ENCODE measurements at regions of chr5 and their contacts with region 1.

Region 1: DNA sequence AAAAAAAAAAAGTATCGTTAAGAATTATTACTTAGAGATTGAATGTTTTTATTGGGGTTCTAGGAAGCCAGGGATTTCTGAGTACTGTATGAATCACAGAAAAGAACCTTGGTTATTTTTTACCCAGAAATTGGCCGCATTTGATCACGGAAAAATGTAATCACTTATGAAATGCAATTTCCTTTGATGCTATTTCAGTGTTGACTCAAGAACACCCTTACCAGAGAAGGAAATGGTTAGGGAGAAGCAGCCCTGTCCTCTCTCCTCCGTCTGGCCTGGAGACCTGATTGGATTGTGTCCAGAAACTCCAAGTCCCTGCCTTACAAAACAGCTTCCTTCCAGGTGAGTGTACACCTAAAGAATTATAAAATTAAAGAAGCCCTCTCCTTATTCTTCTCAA is 116.7 kb downstream of the MED10 start:
- DNase-seq: no peak
- H3K4me3 ChIP-seq: no peak overlapping the region
- H3K27ac ChIP-seq: no peak overlapping the region
- H3K4me1 ChIP-seq: no peaks in the 10 kb centered on the region
- H3K27me3 ChIP-seq: no peaks in the 10 kb centered on the region
- CTCF ChIP-seq: no peak

Region 2: GRCh38 chr5:5964347-5964746 is 297.3 kb before region 1 on chr5:
- CTCF ChIA-PET with region 1: no interaction called
- dilution Hi-C with region 1: no loop called
- in situ Hi-C with region 1: no loop called
- intact Hi-C with region 1: no loop called
- DNase-seq: no peak
- H3K4me3 ChIP-seq: no peak overlapping the region
- H3K27ac ChIP-seq: no peak overlapping the region
- H3K4me1 ChIP-seq: no peaks in the 10 kb centered on the region
- H3K27me3 ChIP-seq: no peaks in the 10 kb centered on the region
- CTCF ChIP-seq: no peak

Region 3: GRCh38 chr5:6158974-6159861 is 102.5 kb before region 1 on chr5:
- CTCF ChIA-PET with region 1: no interaction called
- dilution Hi-C with region 1: no loop called
- in situ Hi-C with region 1: no loop called
- intact Hi-C with region 1: loop called (anchors 10 kb)
- DNase-seq: peak; percentile 87
- H3K4me3 ChIP-seq: peak overlapping the region; percentile 5 to 23 (median 20)
- H3K27ac ChIP-seq: peak overlapping the region; percentile 73
- H3K4me1 ChIP-seq: peaks cover 15% of the 10 kb centered on the region
- H3K27me3 ChIP-seq: no peaks in the 10 kb centered on the region
- CTCF ChIP-seq: no peak

Region 4: GRCh38 chr5:6317113-6317798 is 55.6 kb after region 1 on chr5:
- CTCF ChIA-PET with region 1: no interaction called
- dilution Hi-C with region 1: loop called (anchors 5 kb)
- in situ Hi-C with region 1: no loop called
- intact Hi-C with region 1: no loop called
- DNase-seq: no peak
- H3K4me3 ChIP-seq: no peak overlapping the region
- H3K27ac ChIP-seq: no peak overlapping the region
- H3K4me1 ChIP-seq: no peaks in the 10 kb centered on the region
- H3K27me3 ChIP-seq: no peaks in the 10 kb centered on the region
- CTCF ChIP-seq: no peak

Region 5: GRCh38 chr5:7548596-7548995 is 1286.9 kb after region 1 on chr5:
- CTCF ChIA-PET with region 1: no interaction called
- dilution Hi-C with region 1: no loop called
- in situ Hi-C with region 1: no loop called
- intact Hi-C with region 1: no loop called
- DNase-seq: no peak
- H3K4me3 ChIP-seq: no peak overlapping the region
- H3K27ac ChIP-seq: no peak overlapping the region
- H3K4me1 ChIP-seq: no peaks in the 10 kb centered on the region
- H3K27me3 ChIP-seq: no peaks in the 10 kb centered on the region
- CTCF ChIP-seq: no peak